Activated CD4-positive, alpha-beta memory T cell treated with anti-CD3 and anti-CD28 coated beads, Interleukin-2, amount 10 ng/mL, durations not matched to agents 7 days and 5 days (primary cell): ENCODE measurements at regions of chr19 and their contacts with region 1.

Region 1: DNA sequence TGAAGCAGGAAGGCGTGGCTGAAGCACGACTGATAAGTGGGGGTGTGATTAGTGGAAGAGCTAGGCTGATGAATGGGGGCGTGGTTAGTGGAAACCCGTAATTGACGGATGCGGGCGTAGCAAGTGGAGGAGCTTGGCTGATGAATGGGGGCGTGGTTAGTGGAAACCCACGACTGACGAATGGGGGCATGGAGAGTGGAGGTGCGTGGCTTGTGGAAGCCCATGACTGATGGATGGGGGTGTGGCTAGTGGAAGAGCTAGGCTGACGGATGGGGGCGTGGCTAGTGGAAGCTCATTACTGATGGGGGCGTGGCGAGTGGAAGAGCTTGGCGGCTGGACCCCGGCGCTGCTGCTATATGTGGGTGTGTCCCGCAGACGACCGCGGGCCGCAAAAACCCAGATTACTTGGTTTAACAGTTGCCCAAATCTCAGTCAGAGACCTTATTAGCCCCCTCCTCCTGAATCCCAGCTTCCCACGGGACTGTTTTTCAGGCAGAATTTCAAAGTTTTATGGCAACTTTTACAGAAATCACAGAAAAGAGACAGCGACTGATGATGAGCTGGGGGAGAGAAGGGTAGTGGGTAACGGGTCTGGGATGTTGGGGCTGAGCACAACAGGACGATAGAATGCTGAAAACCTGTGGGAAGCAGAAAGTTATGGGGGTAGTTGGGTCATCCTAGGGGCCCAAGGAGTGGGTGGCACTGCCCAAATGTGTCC is 9.0 kb upstream of the MEIS3 start:
- DNase-seq: peak; percentile 94
- H3K4me3 Mint-ChIP-seq: no peak overlapping the region
- H3K27ac Mint-ChIP-seq: no peak overlapping the region
- H3K4me1 Mint-ChIP-seq: peaks cover 29% of the 10 kb centered on the region
- H3K27me3 Mint-ChIP-seq: peaks cover 31% of the 10 kb centered on the region

Region 2: GRCh38 chr19:47273313-47273977 is 154.9 kb before region 1 on chr19:
- CTCF ChIA-PET with region 1: interaction called, 16 read pairs
- POLR2A ChIA-PET with region 1: no interaction called
- DNase-seq: peak; percentile 93
- H3K4me3 Mint-ChIP-seq: peak overlapping the region; percentile 98
- H3K27ac Mint-ChIP-seq: peak overlapping the region; percentile 99
- H3K4me1 Mint-ChIP-seq: peaks cover 21% of the 10 kb centered on the region
- H3K27me3 Mint-ChIP-seq: no peaks in the 10 kb centered on the region

Region 3: GRCh38 chr19:47296036-47296435 is 132.3 kb before region 1 on chr19:
- CTCF ChIA-PET with region 1: interaction called, 20 read pairs
- POLR2A ChIA-PET with region 1: interaction called, 3 read pairs
- DNase-seq: peak; percentile 81
- H3K4me3 Mint-ChIP-seq: no peak overlapping the region
- H3K27ac Mint-ChIP-seq: no peak overlapping the region
- H3K4me1 Mint-ChIP-seq: peaks cover 13% of the 10 kb centered on the region
- H3K27me3 Mint-ChIP-seq: no peaks in the 10 kb centered on the region

Region 4: DNA sequence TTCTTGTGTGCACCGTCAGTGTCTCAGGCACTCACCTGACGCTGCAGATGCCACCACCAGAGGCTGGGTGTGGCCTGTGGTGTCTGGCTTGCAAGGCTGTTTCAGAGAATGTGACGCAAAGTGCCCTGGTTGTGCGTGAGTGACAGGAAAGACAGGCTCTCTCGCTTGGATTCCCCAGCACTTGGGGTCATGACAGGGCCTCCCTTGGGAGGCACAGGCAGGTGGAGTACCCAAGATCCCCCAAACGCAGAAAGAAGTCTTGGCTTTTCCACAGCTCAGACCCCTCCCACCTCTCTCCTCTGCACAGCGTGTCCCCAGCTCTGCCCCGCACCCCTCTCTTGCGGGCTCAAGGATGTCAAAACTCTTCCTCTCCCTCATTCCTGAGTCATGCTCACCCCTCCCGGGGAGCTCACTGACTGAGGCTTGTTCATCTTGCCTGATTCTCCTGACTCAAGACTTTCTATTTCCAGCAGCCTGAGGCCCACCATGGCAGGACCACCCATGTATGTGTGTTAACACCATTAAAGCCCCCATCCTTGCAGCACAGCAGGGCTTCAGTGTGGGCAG is 58.2 kb before region 1 on chr19:
- CTCF ChIA-PET with region 1: no interaction called
- POLR2A ChIA-PET with region 1: no interaction called
- DNase-seq: no peak
- H3K4me3 Mint-ChIP-seq: no peak overlapping the region
- H3K27ac Mint-ChIP-seq: no peak overlapping the region
- H3K4me1 Mint-ChIP-seq: no peaks in the 10 kb centered on the region
- H3K27me3 Mint-ChIP-seq: no peaks in the 10 kb centered on the region

Region 5: GRCh38 chr19:47391510-47392223 is 36.7 kb before region 1 on chr19:
- CTCF ChIA-PET with region 1: interaction called, 11 read pairs
- POLR2A ChIA-PET with region 1: no interaction called
- DNase-seq: peak; percentile 86
- H3K4me3 Mint-ChIP-seq: no peak overlapping the region
- H3K27ac Mint-ChIP-seq: no peak overlapping the region
- H3K4me1 Mint-ChIP-seq: peaks cover 6% of the 10 kb centered on the region
- H3K27me3 Mint-ChIP-seq: peaks cover 6% of the 10 kb centered on the region

Region 6: DNA sequence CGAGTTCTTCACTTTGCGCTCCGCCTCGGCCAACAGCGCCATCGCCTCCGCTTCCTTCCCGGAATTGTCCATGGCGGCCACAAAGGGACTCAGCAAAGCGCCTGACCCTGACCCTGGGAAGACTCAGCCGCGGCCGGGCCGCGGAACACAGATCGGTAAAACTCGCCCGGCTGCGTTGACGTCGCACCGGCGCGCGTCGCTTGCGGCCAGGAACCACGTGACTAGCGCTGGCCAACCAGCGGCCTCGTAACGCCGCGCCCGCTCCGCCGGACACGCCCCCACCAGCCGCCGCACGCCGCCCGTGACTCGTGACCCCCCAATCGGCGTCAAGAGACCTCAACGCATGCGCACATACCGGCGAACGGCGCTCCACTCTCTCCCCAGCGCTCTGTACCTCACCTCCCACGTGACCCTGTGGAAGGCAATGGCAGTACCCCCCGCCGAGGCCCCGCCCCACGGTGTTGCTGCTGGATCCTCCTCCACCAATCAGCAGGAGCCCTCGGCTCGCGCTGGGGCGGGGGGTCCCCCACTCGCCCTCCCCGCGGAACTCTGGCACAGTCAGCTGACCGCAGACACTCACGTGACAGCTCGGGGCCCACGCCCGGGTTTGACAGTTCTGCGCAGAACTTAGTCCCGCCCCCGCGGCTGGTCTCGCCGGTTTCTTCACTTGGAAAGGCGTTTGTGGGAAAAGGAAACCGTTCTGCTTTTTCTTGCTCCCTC is 86.7 kb after region 1 on chr19 and contains the start of gene NAPA:
- CTCF ChIA-PET with region 1: interaction called, 11 read pairs
- POLR2A ChIA-PET with region 1: interaction called, 5 read pairs
- DNase-seq: peak; percentile 100
- H3K4me3 Mint-ChIP-seq: peak within 1 kb of the TSS; percentile 98
- H3K27ac Mint-ChIP-seq: peak within 1 kb of the TSS; percentile 97
- H3K4me1 Mint-ChIP-seq: peaks cover 88% of the 10 kb centered on the region
- H3K27me3 Mint-ChIP-seq: no peaks in the 10 kb centered on the region
- total RNA-seq, gene NAPA: 117 to 119 TPM

Region 7: GRCh38 chr19:47697863-47698609 is 269.7 kb after region 1 on chr19:
- CTCF ChIA-PET with region 1: interaction called, 154 read pairs
- POLR2A ChIA-PET with region 1: no interaction called
- DNase-seq: peak; percentile 69
- H3K4me3 Mint-ChIP-seq: no peak overlapping the region
- H3K27ac Mint-ChIP-seq: peak overlapping the region; percentile 21
- H3K4me1 Mint-ChIP-seq: no peaks in the 10 kb centered on the region
- H3K27me3 Mint-ChIP-seq: no peaks in the 10 kb centered on the region

Region 8: GRCh38 chr19:47707135-47707925 is 279.0 kb after region 1 on chr19:
- CTCF ChIA-PET with region 1: interaction called, 154 read pairs
- POLR2A ChIA-PET with region 1: interaction called, 4 read pairs
- DNase-seq: peak; percentile 82
- H3K4me3 Mint-ChIP-seq: no peak overlapping the region
- H3K27ac Mint-ChIP-seq: no peak overlapping the region
- H3K4me1 Mint-ChIP-seq: peaks cover 6% of the 10 kb centered on the region
- H3K27me3 Mint-ChIP-seq: peaks cover 8% of the 10 kb centered on the region